PC-9 (cell line): ENCODE measurements at regions of chr15 and their contacts with region 1.

Region 1: DNA sequence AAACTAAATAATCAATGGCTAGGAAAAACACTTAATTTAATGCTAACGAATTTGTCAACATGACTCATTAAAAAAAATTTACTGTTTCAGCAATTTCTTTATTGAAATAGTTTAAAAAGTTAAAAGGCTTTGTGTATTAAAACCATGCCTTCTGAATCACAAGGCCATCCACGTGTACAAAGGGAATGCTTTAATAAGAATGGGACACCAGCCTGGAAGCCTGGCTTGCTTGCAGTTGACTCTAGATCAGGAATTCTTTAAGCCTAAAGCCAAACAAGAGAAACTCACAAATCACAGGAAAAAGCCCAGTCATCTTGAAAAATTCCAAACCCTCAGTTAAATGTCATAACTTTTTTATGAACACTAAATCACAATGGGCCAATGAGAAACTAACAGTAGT is 137.6 kb downstream of the PEAK1 start:
- DNase-seq: no peak
- H3K4me3 ChIP-seq: no peak overlapping the region
- H3K27ac ChIP-seq: no peak overlapping the region
- H3K4me1 ChIP-seq: no peaks in the 10 kb centered on the region
- H3K27me3 ChIP-seq: no peaks in the 10 kb centered on the region
- CTCF ChIP-seq: no peak

Region 2: DNA sequence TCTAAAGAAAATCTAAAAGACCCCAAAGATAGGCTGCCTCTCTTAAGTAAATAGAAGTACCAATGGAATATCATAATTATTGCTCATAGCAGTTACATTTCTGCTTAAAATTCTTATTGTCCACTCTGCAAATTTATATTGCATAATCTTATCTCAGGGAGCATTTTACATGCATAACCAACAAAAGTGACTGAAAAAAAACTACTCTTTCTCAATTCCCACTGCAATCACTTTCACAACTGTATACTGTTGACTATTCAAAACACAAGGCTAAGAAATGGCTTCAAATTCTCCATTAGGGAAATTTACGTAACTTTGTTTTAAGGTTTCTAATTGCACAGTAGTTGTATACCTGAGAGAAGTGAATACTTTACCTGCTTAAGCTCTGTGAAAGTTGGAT is 194.7 kb after region 1 on chr15:
- CTCF ChIA-PET with region 1: no interaction called
- POLR2A ChIA-PET with region 1: interaction called, 16 read pairs
- intact Hi-C with region 1: no loop called
- DNase-seq: no peak
- H3K4me3 ChIP-seq: no peak overlapping the region
- H3K27ac ChIP-seq: no peak overlapping the region
- H3K4me1 ChIP-seq: no peaks in the 10 kb centered on the region
- H3K27me3 ChIP-seq: no peaks in the 10 kb centered on the region
- CTCF ChIP-seq: no peak